ENCODE measurements at regions of chr11 and their contacts with region 1.

Region 1: GRCh38 chr11:36041988-36042611 is 98.2 kb downstream of the LDLRAD3 start:
- DNase-seq: no peak
- H3K4me3 ChIP-seq: no peak overlapping the region
- H3K27ac ChIP-seq: peak overlapping the region in 1 of 59 donors; percentile 4
- H3K27me3 ChIP-seq: no peaks in the 10 kb centered on the region
- CTCF ChIP-seq: peak in 55 of 56 donors; percentile 29 to 76 (median 63)

Region 2: DNA sequence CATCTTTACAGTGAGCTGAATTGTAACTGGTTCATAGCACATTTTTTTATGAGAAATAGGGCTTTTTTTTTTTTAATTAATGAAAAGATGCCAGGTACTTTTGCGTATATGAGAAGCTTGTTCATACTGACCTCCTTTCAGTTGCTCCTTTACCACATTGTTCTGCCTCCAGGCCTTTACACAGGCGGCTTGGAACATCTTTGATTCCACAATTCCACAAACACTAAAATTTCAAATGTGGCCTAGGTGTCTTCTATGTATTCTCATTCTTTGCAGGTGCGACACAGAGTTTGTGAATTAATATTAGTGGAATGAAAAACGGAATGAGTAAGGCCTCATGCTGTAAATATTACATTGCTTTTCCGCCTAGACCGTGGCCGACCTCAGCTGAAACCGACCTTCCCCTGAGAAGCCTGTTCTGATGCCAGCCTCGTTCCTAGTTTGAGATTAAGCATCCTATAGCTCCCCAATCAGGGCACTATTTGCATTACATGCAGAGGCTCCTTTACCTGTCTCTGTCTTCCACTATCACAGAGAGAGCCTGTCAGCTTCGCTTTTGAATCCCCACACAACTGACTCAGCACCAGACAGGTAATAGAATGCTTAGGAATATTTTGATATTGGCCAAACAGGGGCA is 27.6 kb after region 1 on chr11:
- intact Hi-C with region 1: no loop called
- DNase-seq: peak in 1 of 10 donors; percentile 74
- H3K4me3 ChIP-seq: no peak overlapping the region
- H3K27ac ChIP-seq: peak overlapping the region in 12 of 59 donors; percentile 0 to 66 (median 22)
- H3K27me3 ChIP-seq: no peaks in the 10 kb centered on the region
- CTCF ChIP-seq: peak in 40 of 56 donors; percentile 12 to 50 (median 34)

Region 3: GRCh38 chr11:36081274-36081945 is 39.3 kb after region 1 on chr11:
- intact Hi-C with region 1: no loop called
- DNase-seq: peak in 5 of 10 donors; percentile 15 to 69 (median 57)
- H3K4me3 ChIP-seq: no peak overlapping the region
- H3K27ac ChIP-seq: peak overlapping the region in 23 of 59 donors; percentile 1 to 71 (median 30)
- H3K27me3 ChIP-seq: no peaks in the 10 kb centered on the region
- CTCF ChIP-seq: no peak

Region 4: GRCh38 chr11:36131721-36132397 is 89.8 kb after region 1 on chr11:
- intact Hi-C with region 1: loop called (anchors 2 to 10 kb)
- DNase-seq: peak in 9 of 10 donors; percentile 51 to 78 (median 65)
- H3K4me3 ChIP-seq: no peak overlapping the region
- H3K27ac ChIP-seq: peak overlapping the region in 9 of 59 donors; percentile 2 to 30 (median 19)
- H3K27me3 ChIP-seq: no peaks in the 10 kb centered on the region
- CTCF ChIP-seq: peak; percentile 44 to 89 (median 75)

Region 5: GRCh38 chr11:36177836-36178235 is 135.7 kb after region 1 on chr11:
- intact Hi-C with region 1: no loop called
- DNase-seq: no peak
- H3K4me3 ChIP-seq: no peak overlapping the region
- H3K27ac ChIP-seq: no peak overlapping the region
- H3K27me3 ChIP-seq: no peaks in the 10 kb centered on the region
- CTCF ChIP-seq: no peak

Region 6: GRCh38 chr11:36265793-36266628 is 223.9 kb after region 1 on chr11:
- intact Hi-C with region 1: loop called in 1 of 2 experiments (anchors 5 kb)
- DNase-seq: peak in 6 of 10 donors; percentile 27 to 65 (median 46)
- H3K4me3 ChIP-seq: no peak overlapping the region
- H3K27ac ChIP-seq: no peak overlapping the region
- H3K27me3 ChIP-seq: no peaks in the 10 kb centered on the region
- CTCF ChIP-seq: peak; percentile 60 to 91 (median 81)

Region 7: DNA sequence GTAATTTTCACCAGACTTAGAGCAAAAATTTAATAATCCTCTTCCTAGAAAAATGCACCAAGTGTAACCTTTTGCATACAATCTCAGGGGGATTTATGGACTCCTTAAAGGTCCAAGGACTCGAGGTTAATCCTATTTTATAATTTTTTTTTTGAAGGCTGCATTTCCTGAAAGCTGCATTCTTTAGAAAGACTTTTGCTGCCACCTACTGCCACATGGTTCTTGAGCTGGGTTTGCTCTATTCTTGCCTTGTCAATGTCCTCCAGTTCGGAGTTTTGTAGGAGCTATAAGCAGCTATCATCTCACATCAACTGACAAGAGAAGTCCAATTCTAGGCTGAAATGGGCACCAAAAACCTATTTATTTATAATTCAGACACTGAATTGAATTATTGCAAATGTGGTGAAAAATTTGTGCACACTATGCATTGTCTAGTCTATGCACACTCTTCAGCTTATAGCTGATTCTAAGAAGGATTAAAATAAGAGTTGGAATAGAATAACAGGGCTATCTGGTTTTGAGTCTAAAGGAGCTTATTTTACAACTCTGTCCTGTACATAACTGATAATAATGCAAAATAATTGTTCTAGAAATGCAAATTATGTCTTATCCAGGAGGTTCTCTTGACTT is 436.7 kb after region 1 on chr11:
- intact Hi-C with region 1: loop called in 1 of 2 experiments (anchors 10 kb)
- DNase-seq: peak in 3 of 10 donors; percentile 25 to 71 (median 61)
- H3K4me3 ChIP-seq: no peak overlapping the region
- H3K27ac ChIP-seq: peak overlapping the region in 21 of 59 donors; percentile 1 to 70 (median 27)
- H3K27me3 ChIP-seq: no peaks in the 10 kb centered on the region
- CTCF ChIP-seq: peak in 55 of 56 donors; percentile 53 to 90 (median 76)